ENCODE measurements at regions of chr17 and their contacts with region 1.

Region 1: GRCh38 chr17:46044286-46044928 is 45.4 kb downstream of the STH start:
- DNase-seq: peak; percentile 67 to 72
- H3K4me3 ChIP-seq: no peak overlapping the region
- H3K4me3 Mint-ChIP-seq: no peak overlapping the region
- H3K27ac Mint-ChIP-seq: no peak overlapping the region
- H3K4me1 ChIP-seq: no peaks in the 10 kb centered on the region
- H3K4me1 Mint-ChIP-seq: peaks cover 18% of the 10 kb centered on the region
- H3K27me3 ChIP-seq: no peaks in the 10 kb centered on the region
- H3K27me3 Mint-ChIP-seq: no peaks in the 10 kb centered on the region
- CTCF ChIP-seq: peak; percentile 79 to 84

Region 2: DNA sequence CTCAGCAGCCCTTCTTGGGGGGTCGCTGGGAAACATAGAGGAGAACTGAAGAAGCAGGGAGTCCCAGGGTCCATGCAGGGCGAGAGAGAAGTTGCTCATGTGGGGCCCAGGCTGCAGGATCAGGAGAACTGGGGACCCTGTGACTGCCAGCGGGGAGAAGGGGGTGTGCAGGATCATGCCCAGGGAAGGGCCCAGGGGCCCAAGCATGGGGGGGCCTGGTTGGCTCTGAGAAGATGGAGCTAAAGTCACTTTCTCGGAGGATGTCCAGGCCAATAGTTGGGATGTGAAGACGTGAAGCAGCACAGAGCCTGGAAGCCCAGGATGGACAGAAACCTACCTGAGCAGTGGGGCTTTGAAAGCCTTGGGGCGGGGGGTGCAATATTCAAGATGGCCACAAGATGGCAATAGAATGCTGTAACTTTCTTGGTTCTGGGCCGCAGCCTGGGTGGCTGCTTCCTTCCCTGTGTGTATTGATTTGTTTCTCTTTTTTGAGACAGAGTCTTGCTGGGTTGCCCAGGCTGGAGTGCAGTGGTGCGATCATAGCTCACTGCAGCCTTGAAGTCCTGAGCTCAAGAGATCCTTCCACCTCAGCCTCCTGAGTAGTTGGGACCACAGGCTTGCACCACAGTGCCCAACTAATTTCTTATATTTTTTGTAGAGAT is 42.0 kb before region 1 on chr17:
- CTCF ChIA-PET with region 1: no interaction called
- POLR2A ChIA-PET with region 1: no interaction called
- intact Hi-C with region 1: loop called (anchors 1 kb)
- DNase-seq: peak; percentile 73 to 84
- H3K4me3 ChIP-seq: no peak overlapping the region
- H3K4me3 Mint-ChIP-seq: no peak overlapping the region
- H3K27ac Mint-ChIP-seq: no peak overlapping the region
- H3K4me1 ChIP-seq: no peaks in the 10 kb centered on the region
- H3K4me1 Mint-ChIP-seq: peaks cover 6% of the 10 kb centered on the region
- H3K27me3 ChIP-seq: no peaks in the 10 kb centered on the region
- H3K27me3 Mint-ChIP-seq: no peaks in the 10 kb centered on the region
- CTCF ChIP-seq: peak; percentile 87 to 97

Region 3: DNA sequence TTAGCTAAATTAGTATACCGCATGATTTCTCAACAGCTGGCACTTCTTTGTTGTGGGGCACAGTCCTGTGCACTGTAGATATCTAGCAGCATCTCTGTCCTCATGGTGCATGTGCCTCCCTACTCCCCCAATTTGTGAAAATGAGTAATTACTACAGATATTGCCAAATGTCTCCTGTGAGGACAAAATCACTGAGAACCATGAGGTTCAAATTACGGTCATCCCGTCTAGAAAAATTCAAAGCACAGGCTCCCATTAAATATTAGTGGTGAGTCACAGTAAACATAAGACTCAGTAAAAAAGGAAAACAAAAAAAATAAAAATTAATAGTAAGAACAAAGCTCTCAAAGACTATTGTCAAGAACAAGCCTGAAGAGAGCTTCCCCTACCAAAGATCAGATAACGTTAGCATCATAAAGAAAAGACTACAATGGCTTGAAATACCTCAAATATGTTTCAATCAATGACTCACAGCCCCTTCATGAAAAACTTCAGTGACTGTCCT is 12.4 kb after region 1 on chr17:
- CTCF ChIA-PET with region 1: interaction called, 10 read pairs
- POLR2A ChIA-PET with region 1: no interaction called
- intact Hi-C with region 1: no loop called
- DNase-seq: no peak
- H3K4me3 ChIP-seq: no peak overlapping the region
- H3K4me3 Mint-ChIP-seq: no peak overlapping the region
- H3K27ac Mint-ChIP-seq: no peak overlapping the region
- H3K4me1 ChIP-seq: no peaks in the 10 kb centered on the region
- H3K4me1 Mint-ChIP-seq: peaks cover 22% of the 10 kb centered on the region
- H3K27me3 ChIP-seq: no peaks in the 10 kb centered on the region
- H3K27me3 Mint-ChIP-seq: no peaks in the 10 kb centered on the region
- CTCF ChIP-seq: no peak

Region 4: DNA sequence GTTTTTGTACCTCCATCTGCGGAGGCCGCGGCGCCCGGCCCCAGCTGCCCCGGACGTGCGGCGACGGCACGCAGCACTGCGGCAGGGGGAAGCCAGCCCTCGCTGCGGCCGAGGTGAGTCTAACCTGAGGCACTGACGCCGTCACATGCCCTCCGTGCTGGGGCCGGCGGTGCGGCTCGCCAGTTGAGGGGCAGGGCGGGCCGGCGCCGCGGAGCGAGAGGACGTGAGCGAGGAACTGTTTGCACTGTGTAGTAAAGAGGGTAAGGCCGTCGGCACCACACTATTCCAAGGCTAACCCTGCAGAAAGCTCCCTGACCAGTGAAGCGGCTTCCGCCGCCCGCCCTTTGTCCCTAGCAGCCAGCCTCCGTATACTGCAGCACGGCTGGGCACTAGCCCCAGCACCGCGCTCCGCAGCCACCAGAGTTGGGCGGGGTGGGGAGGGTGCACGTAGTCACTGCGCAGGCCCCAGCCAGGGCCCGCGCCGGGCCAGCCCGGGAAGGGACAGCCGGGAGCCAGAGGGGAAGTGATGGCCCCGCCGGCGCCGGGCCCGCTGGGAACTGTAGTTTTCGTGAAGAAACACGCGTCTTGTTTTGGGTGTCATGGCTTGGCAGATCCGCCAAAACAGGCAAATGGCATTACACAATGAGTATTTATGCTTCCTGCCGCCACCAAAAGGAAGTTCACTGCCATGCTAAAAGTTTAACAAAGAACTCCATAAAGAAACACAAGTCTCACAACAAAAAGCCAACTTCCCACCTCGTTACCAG is 149.4 kb after region 1 on chr17:
- CTCF ChIA-PET with region 1: interaction called, 32 read pairs
- POLR2A ChIA-PET with region 1: interaction called, 5 read pairs
- intact Hi-C with region 1: loop called (anchors 1 kb)
- DNase-seq: peak; percentile 93 to 94
- H3K4me3 ChIP-seq: peak overlapping the region; percentile 97
- H3K4me3 Mint-ChIP-seq: peak overlapping the region; percentile 98
- H3K27ac Mint-ChIP-seq: peak overlapping the region; percentile 23
- H3K4me1 ChIP-seq: peaks cover 27% of the 10 kb centered on the region
- H3K4me1 Mint-ChIP-seq: peaks cover 21% of the 10 kb centered on the region
- H3K27me3 ChIP-seq: no peaks in the 10 kb centered on the region
- H3K27me3 Mint-ChIP-seq: no peaks in the 10 kb centered on the region
- CTCF ChIP-seq: no peak

Region 5: GRCh38 chr17:46212634-46213435 is 168.4 kb after region 1 on chr17:
- CTCF ChIA-PET with region 1: interaction called, 32 read pairs
- POLR2A ChIA-PET with region 1: interaction called, 3 read pairs
- intact Hi-C with region 1: loop called (anchors 1 kb)
- DNase-seq: peak; percentile 63 to 65
- H3K4me3 ChIP-seq: no peak overlapping the region
- H3K4me3 Mint-ChIP-seq: no peak overlapping the region
- H3K27ac Mint-ChIP-seq: no peak overlapping the region
- H3K4me1 ChIP-seq: no peaks in the 10 kb centered on the region
- H3K4me1 Mint-ChIP-seq: peaks cover 9% of the 10 kb centered on the region
- H3K27me3 ChIP-seq: no peaks in the 10 kb centered on the region
- H3K27me3 Mint-ChIP-seq: no peaks in the 10 kb centered on the region
- CTCF ChIP-seq: peak; percentile 69 to 72